MCF 10A (cell line): ENCODE measurements at regions of chr10 and their contacts with region 1.

Region 1: DNA sequence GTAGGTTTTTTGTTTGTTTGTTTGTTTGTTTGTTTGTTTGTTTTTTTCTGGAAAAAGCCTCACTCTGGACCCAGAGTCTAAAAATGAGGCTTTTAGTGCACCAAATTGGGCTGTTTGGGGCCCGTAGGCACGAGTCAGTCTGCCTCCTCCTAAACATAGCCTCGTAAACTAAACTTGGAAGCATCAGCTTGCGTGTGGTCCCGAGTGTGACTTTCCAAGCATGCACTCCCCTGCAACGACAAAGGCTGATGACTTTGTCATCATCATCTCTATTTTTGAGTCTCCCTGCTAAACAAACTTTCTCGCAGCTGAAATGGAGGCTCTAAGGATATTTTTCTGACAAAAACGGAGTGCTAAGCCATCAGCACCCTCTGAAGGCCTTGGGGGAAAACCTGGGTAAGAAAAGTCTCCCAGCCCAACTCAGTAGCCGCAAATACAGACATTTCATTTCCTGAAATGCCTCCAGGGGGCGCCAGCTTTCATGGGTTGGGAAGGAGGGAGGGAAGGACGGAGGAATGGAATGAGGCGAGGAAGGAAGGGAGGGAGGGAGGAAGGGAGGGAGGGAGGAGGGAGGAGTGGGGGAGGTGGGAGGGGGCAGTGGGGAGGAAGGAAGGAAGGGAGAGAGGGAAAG is 245.9 kb downstream of the KCNMA1 start:
- DNase-seq: peak; percentile 82
- H3K4me3 Mint-ChIP-seq: no peak overlapping the region
- H3K27ac Mint-ChIP-seq: no peak overlapping the region
- H3K4me1 Mint-ChIP-seq: peaks cover 41% of the 10 kb centered on the region
- H3K27me3 Mint-ChIP-seq: no peaks in the 10 kb centered on the region
- CTCF ChIP-seq: peak; percentile 60

Region 2: GRCh38 chr10:77251297-77252013 is 140.3 kb before region 1 on chr10:
- CTCF ChIA-PET with region 1: interaction called, 8 read pairs
- POLR2A ChIA-PET with region 1: no interaction called
- intact Hi-C with region 1: loop called (anchors 1 kb)
- DNase-seq: peak; percentile 50
- H3K4me3 Mint-ChIP-seq: no peak overlapping the region
- H3K27ac Mint-ChIP-seq: no peak overlapping the region
- H3K4me1 Mint-ChIP-seq: peaks cover 13% of the 10 kb centered on the region
- H3K27me3 Mint-ChIP-seq: no peaks in the 10 kb centered on the region
- CTCF ChIP-seq: peak; percentile 86

Region 3: DNA sequence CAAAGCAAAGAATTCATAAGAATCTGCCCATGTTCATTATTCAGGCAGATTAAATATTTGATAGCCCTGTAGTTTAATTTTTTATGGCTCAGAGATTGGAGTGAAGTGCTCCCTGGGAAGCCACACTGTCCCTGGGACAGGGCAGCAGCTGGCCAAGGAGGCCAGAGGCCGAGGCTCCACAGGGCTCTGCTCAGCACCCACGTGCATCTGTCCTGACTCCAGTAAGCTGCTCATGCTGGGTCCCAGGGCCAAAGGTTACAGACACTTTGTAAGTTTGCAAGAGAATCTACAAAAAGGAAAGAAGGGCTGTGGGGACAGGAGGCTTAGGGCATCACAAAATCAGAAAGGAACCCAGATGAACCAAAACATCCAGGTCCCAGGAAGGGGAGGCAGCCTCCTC is 90.4 kb after region 1 on chr10:
- CTCF ChIA-PET with region 1: no interaction called
- POLR2A ChIA-PET with region 1: no interaction called
- intact Hi-C with region 1: no loop called
- DNase-seq: no peak
- H3K4me3 Mint-ChIP-seq: no peak overlapping the region
- H3K27ac Mint-ChIP-seq: no peak overlapping the region
- H3K4me1 Mint-ChIP-seq: peaks cover 8% of the 10 kb centered on the region
- H3K27me3 Mint-ChIP-seq: no peaks in the 10 kb centered on the region
- CTCF ChIP-seq: no peak

Region 4: GRCh38 chr10:77501152-77501845 is 109.6 kb after region 1 on chr10:
- CTCF ChIA-PET with region 1: interaction called, 7 read pairs
- POLR2A ChIA-PET with region 1: interaction called, 5 read pairs
- intact Hi-C with region 1: loop called (anchors 1 kb)
- DNase-seq: peak; percentile 39
- H3K4me3 Mint-ChIP-seq: no peak overlapping the region
- H3K27ac Mint-ChIP-seq: no peak overlapping the region
- H3K4me1 Mint-ChIP-seq: peaks cover 30% of the 10 kb centered on the region
- H3K27me3 Mint-ChIP-seq: no peaks in the 10 kb centered on the region
- CTCF ChIP-seq: no peak

Region 5: DNA sequence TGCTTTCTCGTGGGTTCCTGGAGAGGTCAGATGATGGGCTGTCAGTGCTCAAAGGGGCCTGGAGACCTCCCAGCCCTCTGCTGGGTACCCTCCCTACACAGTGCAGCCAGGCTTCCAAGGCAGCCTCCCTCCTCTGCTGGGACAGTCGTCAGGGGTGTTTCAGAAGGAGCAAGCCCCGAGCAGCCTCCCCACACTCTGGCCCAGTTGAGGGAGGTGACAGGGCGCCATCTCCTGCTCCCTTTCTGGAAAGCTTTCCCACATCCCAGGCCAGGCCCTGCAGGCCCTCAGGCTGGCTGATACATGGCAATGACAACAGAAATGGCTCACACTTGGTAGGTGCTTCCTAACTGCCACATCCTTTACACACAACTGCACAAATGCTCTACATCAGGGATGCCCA is 213.7 kb after region 1 on chr10:
- CTCF ChIA-PET with region 1: interaction called, 3 read pairs
- POLR2A ChIA-PET with region 1: no interaction called
- intact Hi-C with region 1: loop called (anchors 1 kb)
- DNase-seq: peak; percentile 35
- H3K4me3 Mint-ChIP-seq: no peak overlapping the region
- H3K27ac Mint-ChIP-seq: no peak overlapping the region
- H3K4me1 Mint-ChIP-seq: peaks cover 28% of the 10 kb centered on the region
- H3K27me3 Mint-ChIP-seq: no peaks in the 10 kb centered on the region
- CTCF ChIP-seq: peak; percentile 27

Region 6: DNA sequence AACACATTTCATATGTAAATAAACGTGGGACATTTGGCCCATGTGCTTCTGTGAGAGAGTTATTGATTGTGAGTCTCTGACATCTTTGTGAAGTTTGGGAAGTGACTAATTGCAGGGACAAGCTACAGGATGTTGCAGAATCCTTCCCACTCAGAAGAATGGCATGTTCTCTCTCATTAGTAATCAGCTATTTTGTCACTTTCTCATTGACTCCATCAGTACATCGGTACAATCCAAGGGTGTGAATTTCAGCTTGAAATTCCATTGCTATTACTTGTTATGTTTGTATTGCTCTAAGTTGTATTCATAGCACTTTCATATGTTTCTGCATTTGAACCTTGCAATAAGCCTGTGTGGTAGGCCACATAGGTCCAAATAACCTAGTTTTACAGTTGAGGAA is 345.9 kb after region 1 on chr10:
- CTCF ChIA-PET with region 1: no interaction called
- POLR2A ChIA-PET with region 1: no interaction called
- intact Hi-C with region 1: no loop called
- DNase-seq: peak; percentile 86
- H3K4me3 Mint-ChIP-seq: peak overlapping the region; percentile 4
- H3K27ac Mint-ChIP-seq: peak overlapping the region; percentile 84
- H3K4me1 Mint-ChIP-seq: peaks cover 37% of the 10 kb centered on the region
- H3K27me3 Mint-ChIP-seq: no peaks in the 10 kb centered on the region
- CTCF ChIP-seq: no peak

Region 7: GRCh38 chr10:77756319-77757232 is 364.9 kb after region 1 on chr10:
- CTCF ChIA-PET with region 1: no interaction called
- POLR2A ChIA-PET with region 1: no interaction called
- intact Hi-C with region 1: loop called (anchors 5 kb)
- DNase-seq: peak; percentile 80
- H3K4me3 Mint-ChIP-seq: no peak overlapping the region
- H3K27ac Mint-ChIP-seq: no peak overlapping the region
- H3K4me1 Mint-ChIP-seq: peaks cover 38% of the 10 kb centered on the region
- H3K27me3 Mint-ChIP-seq: no peaks in the 10 kb centered on the region
- CTCF ChIP-seq: peak; percentile 81